Dorsolateral prefrontal cortex (tissue), 120 donors: ENCODE measurements at regions of chr11 and their contacts with region 1.

Region 1: GRCh38 chr11:112289588-112290492 is 29.2 kb upstream of the PLET1 start:
- DNase-seq: peak; percentile 65 to 90 (median 76)
- H3K4me3 ChIP-seq: peak overlapping the region; percentile 53 to 90 (median 71)
- H3K27ac ChIP-seq: peak overlapping the region in 47 of 59 donors; percentile 0 to 83 (median 61)
- H3K27me3 ChIP-seq: no peaks in the 10 kb centered on the region
- CTCF ChIP-seq: peak; percentile 56 to 99 (median 91)

Region 2: GRCh38 chr11:111652184-111652583 is 637.7 kb before region 1 on chr11:
- intact Hi-C with region 1: no loop called
- DNase-seq: no peak
- H3K4me3 ChIP-seq: no peak overlapping the region
- H3K27ac ChIP-seq: no peak overlapping the region
- H3K27me3 ChIP-seq: no peaks in the 10 kb centered on the region
- CTCF ChIP-seq: no peak

Region 3: DNA sequence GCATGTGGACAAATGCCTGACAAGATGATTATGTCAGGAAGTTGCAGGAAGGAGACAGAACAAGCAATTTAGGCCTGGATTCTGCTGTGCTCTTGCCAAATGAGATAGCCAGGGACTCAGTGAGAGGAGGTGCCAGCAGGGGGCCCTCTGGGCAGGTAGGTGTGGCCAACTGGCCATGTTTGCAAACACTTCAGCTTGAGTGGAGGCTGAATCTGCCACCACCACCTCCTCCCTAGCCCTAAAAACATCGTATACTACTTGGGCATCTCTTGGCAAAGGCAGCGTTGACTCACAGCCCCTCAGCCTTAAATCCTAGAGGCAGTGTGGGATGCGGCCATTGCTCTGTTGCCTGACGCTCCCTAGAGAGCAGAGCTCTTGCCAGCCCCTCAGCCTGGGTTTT is 65.9 kb after region 1 on chr11:
- intact Hi-C with region 1: no loop called
- DNase-seq: peak in 7 of 10 donors; percentile 19 to 85 (median 50)
- H3K4me3 ChIP-seq: no peak overlapping the region
- H3K27ac ChIP-seq: no peak overlapping the region
- H3K27me3 ChIP-seq: no peaks in the 10 kb centered on the region
- CTCF ChIP-seq: peak in 19 of 56 donors; percentile 8 to 36 (median 20)

Region 4: GRCh38 chr11:112410325-112410724 is 120.5 kb after region 1 on chr11:
- intact Hi-C with region 1: no loop called
- DNase-seq: no peak
- H3K4me3 ChIP-seq: no peak overlapping the region
- H3K27ac ChIP-seq: no peak overlapping the region
- H3K27me3 ChIP-seq: peaks cover 0 to 6% (median 0%) of the 10 kb centered on the region in 45 donors
- CTCF ChIP-seq: no peak

Region 5: GRCh38 chr11:112523477-112523876 is 233.6 kb after region 1 on chr11:
- intact Hi-C with region 1: loop called in 1 of 2 experiments (anchors 10 kb)
- DNase-seq: peak; percentile 24 to 86 (median 69)
- H3K4me3 ChIP-seq: peak overlapping the region in 6 of 59 donors; percentile 3 to 32 (median 18)
- H3K27ac ChIP-seq: peak overlapping the region in 57 of 59 donors; percentile 43 to 94 (median 83)
- H3K27me3 ChIP-seq: no peaks in the 10 kb centered on the region
- CTCF ChIP-seq: peak in 2 of 56 donors; percentile 13 to 21

Region 6: DNA sequence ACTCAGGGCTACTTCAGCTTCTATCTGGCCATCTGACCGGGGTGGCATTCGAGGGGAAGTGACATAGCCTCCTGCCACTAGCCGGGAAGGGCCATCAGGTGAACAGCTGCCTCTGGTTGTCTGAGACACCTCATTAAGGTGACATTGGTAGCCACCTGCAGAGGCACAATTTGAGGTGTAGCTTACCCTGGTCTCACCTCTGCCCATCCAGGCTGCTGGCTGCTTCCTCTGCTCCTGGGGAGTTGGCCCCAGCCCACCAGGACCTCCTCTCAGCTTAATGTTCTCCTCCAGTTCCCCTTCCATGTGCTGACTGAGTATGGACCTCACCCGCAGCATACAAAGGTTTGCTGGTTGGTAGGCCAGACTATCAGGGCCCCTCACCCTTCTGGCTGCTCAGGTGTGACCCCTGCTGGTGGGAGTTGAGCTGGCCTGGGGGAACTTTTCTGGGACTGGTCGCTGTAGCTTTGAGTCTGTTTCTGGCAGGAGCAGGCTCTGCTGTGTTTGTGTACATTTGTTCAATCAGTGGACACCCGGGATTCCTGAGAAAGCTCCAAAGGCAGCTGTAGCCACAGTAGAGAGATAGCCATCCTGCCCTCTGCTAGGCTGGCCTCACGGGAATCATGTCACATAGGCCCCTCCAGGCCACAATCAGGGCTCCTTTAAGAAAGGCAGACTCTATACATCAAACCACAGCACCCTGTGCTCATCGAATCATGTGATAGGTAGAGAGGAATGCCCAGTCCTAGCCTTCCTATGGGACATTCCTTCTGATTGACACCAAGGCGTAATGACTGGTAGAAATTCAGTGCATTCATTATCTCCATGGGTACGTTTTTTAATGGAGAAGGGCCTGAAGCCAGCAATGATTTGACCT is 265.9 kb after region 1 on chr11:
- intact Hi-C with region 1: loop called (anchors 1 to 2 kb)
- DNase-seq: peak in 9 of 10 donors; percentile 14 to 74 (median 56)
- H3K4me3 ChIP-seq: no peak overlapping the region
- H3K27ac ChIP-seq: peak overlapping the region in 1 of 59 donors; percentile 27
- H3K27me3 ChIP-seq: no peaks in the 10 kb centered on the region
- CTCF ChIP-seq: peak in 55 of 56 donors; percentile 47 to 89 (median 71)

Region 7: DNA sequence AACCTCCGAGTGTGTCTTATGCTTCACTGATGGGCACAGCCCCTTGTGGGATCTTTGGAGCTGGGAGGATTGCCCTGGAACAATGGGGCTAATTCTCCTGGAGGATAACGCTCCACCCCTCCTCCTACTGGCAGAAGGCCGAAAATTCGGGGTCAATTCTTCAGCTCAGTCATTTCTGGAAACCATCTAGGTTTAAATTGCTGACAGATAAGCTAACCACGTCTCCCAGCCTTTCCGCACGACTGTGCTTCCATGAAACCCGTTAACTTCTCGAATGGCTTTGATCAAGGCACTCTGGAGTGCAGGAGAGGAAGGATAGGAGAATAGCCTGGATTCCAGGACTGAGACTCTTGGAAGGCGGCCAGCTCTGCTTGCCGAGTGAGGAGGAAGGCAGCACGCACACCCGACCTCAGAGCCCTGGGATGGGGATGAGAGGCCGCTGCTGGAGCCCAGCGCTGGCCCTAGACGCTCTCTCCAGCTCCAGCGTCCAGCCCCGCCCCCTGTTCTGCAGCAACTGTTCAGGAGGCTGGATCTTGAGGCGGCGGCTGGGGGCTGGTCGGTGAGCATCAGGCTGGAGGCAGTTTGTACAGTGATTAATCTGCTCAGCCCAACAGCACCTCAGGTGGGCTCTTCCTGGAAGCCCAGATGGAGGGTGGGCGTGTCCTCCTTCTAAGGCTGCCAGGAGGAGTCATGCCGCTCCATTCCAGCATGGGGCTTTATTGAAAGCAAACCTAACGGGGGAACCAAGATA is 494.7 kb after region 1 on chr11:
- intact Hi-C with region 1: loop called in 1 of 2 experiments (anchors 10 kb)
- DNase-seq: peak in 8 of 10 donors; percentile 54 to 76 (median 65)
- H3K4me3 ChIP-seq: peak overlapping the region in 57 of 59 donors; percentile 4 to 62 (median 40)
- H3K27ac ChIP-seq: peak overlapping the region in 51 of 59 donors; percentile 3 to 86 (median 71)
- H3K27me3 ChIP-seq: no peaks in the 10 kb centered on the region
- CTCF ChIP-seq: peak in 7 of 56 donors; percentile 4 to 21 (median 17)

Region 8: GRCh38 chr11:113289431-113290187 is 999.8 kb after region 1 on chr11:
- intact Hi-C with region 1: loop called (anchors 5 kb)
- DNase-seq: peak; percentile 64 to 83 (median 66)
- H3K4me3 ChIP-seq: no peak overlapping the region
- H3K27ac ChIP-seq: no peak overlapping the region
- H3K27me3 ChIP-seq: peaks cover 0 to 4% (median 0%) of the 10 kb centered on the region in 45 donors
- CTCF ChIP-seq: peak; percentile 73 to 98 (median 89)